CD4-positive, alpha-beta T cell (primary cell): ENCODE measurements at regions of chr2 and their contacts with region 1.

Region 1: DNA sequence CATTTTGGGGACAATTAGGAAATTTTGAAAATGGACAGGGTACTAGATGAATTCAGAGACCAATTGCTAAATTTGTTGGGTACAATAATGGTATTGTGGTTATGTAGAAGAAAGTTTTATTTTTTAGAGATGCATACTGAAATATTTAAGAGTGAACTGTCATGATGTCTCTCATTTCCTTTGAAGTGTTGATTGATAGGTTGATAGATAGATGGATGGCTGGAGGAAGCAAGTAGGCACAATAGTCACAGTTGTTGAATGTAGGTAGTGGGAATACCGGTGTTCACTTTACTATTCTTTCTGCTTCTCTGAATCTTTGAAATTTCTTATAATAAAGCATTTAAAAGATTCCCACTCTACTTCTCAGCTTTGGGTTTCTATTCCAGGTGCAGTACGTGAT is 151.7 kb upstream of the FOSL2 start:
- DNase-seq: no peak
- ATAC-seq: no peak
- H3K4me3 ChIP-seq: no peak overlapping the region
- H3K4me3 Mint-ChIP-seq: no peak overlapping the region
- H3K27ac ChIP-seq: no peak overlapping the region
- H3K27ac Mint-ChIP-seq: no peak overlapping the region
- H3K4me1 ChIP-seq: peaks cover 2% of the 10 kb centered on the region
- H3K4me1 Mint-ChIP-seq: no peaks in the 10 kb centered on the region
- H3K27me3 ChIP-seq: no peaks in the 10 kb centered on the region
- H3K27me3 Mint-ChIP-seq: no peaks in the 10 kb centered on the region
- CTCF ChIP-seq: no peak

Region 2: DNA sequence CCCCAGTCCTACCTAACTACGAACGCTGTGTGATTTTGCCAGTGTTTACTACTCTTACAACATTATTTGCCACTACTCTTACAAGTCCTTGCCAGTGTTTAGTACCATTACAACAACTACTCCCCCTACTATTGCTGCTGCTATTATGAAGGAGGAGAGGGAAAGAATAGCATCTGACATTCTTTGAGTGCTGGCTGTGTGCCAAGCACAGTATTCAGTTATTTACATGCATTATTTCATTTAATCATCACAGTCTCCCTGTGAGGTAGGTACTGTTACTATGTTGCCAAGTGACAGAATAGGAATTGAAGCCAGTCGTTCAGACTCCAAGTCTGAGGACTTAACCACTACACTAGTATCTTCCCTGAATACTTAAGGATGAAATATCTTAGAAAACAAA is 34.2 kb before region 1 on chr2:
- CTCF ChIA-PET with region 1: no interaction called
- POLR2A ChIA-PET with region 1: no interaction called
- intact Hi-C with region 1: no loop called
- DNase-seq: no peak
- ATAC-seq: no peak
- H3K4me3 ChIP-seq: no peak overlapping the region
- H3K4me3 Mint-ChIP-seq: no peak overlapping the region
- H3K27ac ChIP-seq: no peak overlapping the region
- H3K27ac Mint-ChIP-seq: no peak overlapping the region
- H3K4me1 ChIP-seq: no peaks in the 10 kb centered on the region
- H3K4me1 Mint-ChIP-seq: no peaks in the 10 kb centered on the region
- H3K27me3 ChIP-seq: no peaks in the 10 kb centered on the region
- H3K27me3 Mint-ChIP-seq: no peaks in the 10 kb centered on the region
- CTCF ChIP-seq: no peak

Region 3: DNA sequence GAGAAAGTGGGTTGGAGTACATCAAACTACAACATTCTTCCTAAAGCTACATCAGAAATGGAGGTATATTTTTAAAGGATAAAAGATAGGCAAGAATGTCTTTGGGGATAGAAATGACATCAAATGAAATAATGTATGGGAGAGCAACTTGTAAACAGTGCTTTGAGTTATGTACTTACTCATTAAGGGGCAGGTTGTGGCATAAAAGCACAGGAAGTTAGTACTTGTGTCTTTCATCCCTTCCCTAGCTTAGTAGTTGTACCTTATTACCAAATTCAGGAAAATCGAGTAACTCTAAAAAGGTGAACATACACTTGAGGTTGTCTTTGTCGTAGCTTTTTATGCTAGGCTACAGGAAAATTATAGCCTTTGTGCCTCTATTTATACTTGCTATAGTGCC is 539.6 kb after region 1 on chr2:
- CTCF ChIA-PET with region 1: no interaction called
- POLR2A ChIA-PET with region 1: no interaction called
- intact Hi-C with region 1: loop called in 1 of 2 experiments (anchors 5 kb)
- DNase-seq: no peak
- ATAC-seq: no peak
- H3K4me3 ChIP-seq: no peak overlapping the region
- H3K4me3 Mint-ChIP-seq: no peak overlapping the region
- H3K27ac ChIP-seq: no peak overlapping the region
- H3K27ac Mint-ChIP-seq: no peak overlapping the region
- H3K4me1 ChIP-seq: peaks cover 4% of the 10 kb centered on the region
- H3K4me1 Mint-ChIP-seq: peaks cover 37% of the 10 kb centered on the region
- H3K27me3 ChIP-seq: no peaks in the 10 kb centered on the region
- H3K27me3 Mint-ChIP-seq: no peaks in the 10 kb centered on the region
- CTCF ChIP-seq: no peak